ENCODE measurements at regions of chr19 and their contacts with region 1.

Region 1: DNA sequence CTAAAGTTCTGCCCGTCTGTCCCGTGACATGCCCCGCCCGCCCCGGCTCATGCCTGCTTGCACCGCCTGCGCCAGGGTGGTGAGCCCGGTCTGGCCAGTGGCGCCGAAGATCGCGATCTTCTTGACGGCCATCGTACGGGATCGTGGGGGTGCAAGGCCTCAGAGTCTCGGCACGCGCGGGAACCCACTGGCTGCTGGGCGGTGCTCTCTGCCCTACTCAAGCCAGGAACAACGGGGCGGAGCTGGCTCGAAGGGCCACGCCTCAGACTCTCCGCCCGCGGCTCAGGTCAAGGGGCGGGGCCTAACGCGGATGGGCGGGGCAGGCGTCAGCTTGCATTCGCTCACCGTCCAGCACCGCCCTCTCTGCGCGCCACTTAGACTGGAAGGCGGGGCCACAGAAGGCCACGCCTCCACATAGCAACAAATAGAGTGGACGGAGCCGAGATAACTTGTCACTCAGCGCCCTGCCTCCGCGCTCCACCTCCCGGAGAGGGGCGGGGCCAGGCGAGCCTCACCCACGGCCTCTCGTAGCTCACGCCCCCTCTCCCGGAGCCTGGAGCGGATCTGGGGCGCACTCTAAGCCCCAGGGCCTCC is at the start of gene BLVRB:
- DNase-seq: peak; percentile 98 to 100 (median 99)
- ATAC-seq: peak; percentile 90
- H3K4me3 ChIP-seq: peak within 1 kb of the TSS; percentile 44
- H3K4me3 Mint-ChIP-seq: peak within 1 kb of the TSS; percentile 83 to 95 (median 86)
- H3K27ac ChIP-seq: peak within 1 kb of the TSS; percentile 66
- H3K27ac Mint-ChIP-seq: peak within 1 kb of the TSS; percentile 70 to 94 (median 87)
- H3K4me1 ChIP-seq: peaks cover 0 to 7% of the 10 kb centered on the region in 2 donors
- H3K4me1 Mint-ChIP-seq: peaks cover 18 to 27% (median 25%) of the 10 kb centered on the region in 7 donors
- H3K27me3 ChIP-seq: peaks cover 3 to 4% of the 10 kb centered on the region in 2 donors
- H3K27me3 Mint-ChIP-seq: peaks cover 6 to 28% (median 7%) of the 10 kb centered on the region in 5 donors
- total RNA-seq, gene BLVRB: 11.0 to 42.2 (median 13.3) TPM

Region 2: GRCh38 chr19:40348125-40348913 is 117.3 kb before region 1 on chr19 and contains the starts of genes C19orf47 and PLD3:
- CTCF ChIA-PET with region 1: no interaction called
- POLR2A ChIA-PET with region 1: interaction called, 4 read pairs
- intact Hi-C with region 1: loop called in 1 of 2 experiments (anchors 1 kb)
- DNase-seq: peak; percentile 92 to 99 (median 97)
- ATAC-seq: peak; percentile 97
- H3K4me3 ChIP-seq: peak within 1 kb of the TSS; percentile 61
- H3K4me3 Mint-ChIP-seq: peak within 1 kb of the TSS; percentile 83 to 99 (median 96)
- H3K27ac ChIP-seq: peak within 1 kb of the TSS; percentile 86
- H3K27ac Mint-ChIP-seq: peak within 1 kb of the TSS; percentile 81 to 98 (median 93)
- H3K4me1 ChIP-seq: peaks cover 7 to 14% of the 10 kb centered on the region in 2 donors
- H3K4me1 Mint-ChIP-seq: peaks cover 20 to 51% (median 44%) of the 10 kb centered on the region in 7 donors
- H3K27me3 ChIP-seq: no peaks in the 10 kb centered on the region
- H3K27me3 Mint-ChIP-seq: peaks cover 0 to 2% (median 0%) of the 10 kb centered on the region in 5 donors
- total RNA-seq, gene C19orf47: 12.6 to 20.3 (median 15.8) TPM
- total RNA-seq, gene PLD3: 75.4 to 137 (median 114) TPM

Region 3: DNA sequence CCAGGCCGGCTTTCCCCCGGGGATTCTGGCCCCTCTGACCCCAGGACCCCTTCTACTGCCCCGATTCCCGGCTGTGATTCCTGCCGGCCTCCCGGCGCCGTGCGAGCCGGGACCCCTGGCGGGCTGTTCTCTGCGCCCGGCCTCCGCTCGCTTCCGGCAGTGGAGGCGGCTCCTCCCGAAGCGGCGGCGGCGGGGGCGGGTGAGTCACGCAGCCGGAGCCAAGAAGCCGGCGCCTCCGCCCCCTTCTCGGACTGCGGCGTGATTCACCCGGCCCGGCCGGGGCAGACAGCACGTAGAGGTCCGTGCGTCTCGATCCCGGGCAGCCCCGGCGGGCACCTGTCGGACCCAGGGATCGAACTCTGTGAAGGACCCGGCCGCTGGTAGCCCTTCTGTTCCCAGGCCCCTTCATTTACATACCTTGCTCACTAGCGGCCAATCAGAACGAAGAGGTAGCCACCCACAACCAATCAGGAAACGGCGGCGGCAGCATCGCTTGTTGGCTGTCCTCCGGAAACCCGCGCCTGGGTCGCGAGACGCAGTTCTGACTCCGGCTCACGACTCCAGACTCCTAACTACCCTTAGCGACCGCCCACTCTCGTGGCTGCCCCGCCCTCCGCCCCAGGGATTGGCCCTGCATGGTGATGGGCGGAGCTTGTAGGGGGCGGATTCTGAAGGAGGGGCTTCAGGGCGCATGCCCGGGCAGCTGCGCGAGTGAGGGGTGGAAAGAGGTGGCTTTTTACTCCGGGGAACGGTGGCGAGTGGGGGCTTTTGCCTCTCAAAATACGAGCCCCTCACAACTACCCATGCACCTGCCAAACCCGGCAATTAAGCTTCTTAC is 40.0 kb before region 1 on chr19 and contains the start of gene SERTAD1:
- CTCF ChIA-PET with region 1: interaction called, 33 read pairs
- POLR2A ChIA-PET with region 1: interaction called, 47 read pairs
- intact Hi-C with region 1: loop called (anchors 1 kb)
- DNase-seq: peak; percentile 99 to 100 (median 100)
- ATAC-seq: peak; percentile 96
- H3K4me3 ChIP-seq: peak within 1 kb of the TSS; percentile 77
- H3K4me3 Mint-ChIP-seq: peak within 1 kb of the TSS; percentile 90 to 99 (median 96)
- H3K27ac ChIP-seq: peak within 1 kb of the TSS; percentile 87
- H3K27ac Mint-ChIP-seq: peak within 1 kb of the TSS; percentile 92 to 100 (median 98)
- H3K4me1 ChIP-seq: peaks cover 15 to 18% of the 10 kb centered on the region in 2 donors
- H3K4me1 Mint-ChIP-seq: peaks cover 12 to 38% (median 24%) of the 10 kb centered on the region in 7 donors
- H3K27me3 ChIP-seq: no peaks in the 10 kb centered on the region
- H3K27me3 Mint-ChIP-seq: peaks cover 0 to 2% (median 0%) of the 10 kb centered on the region in 5 donors
- total RNA-seq, gene SERTAD1: 8.1 to 30.9 (median 13.5) TPM

Region 4: GRCh38 chr19:40502647-40503319 is 37.1 kb after region 1 on chr19:
- CTCF ChIA-PET with region 1: no interaction called
- POLR2A ChIA-PET with region 1: no interaction called
- intact Hi-C with region 1: no loop called
- DNase-seq: no peak
- ATAC-seq: no peak
- H3K4me3 ChIP-seq: no peak overlapping the region
- H3K4me3 Mint-ChIP-seq: no peak overlapping the region
- H3K27ac ChIP-seq: no peak overlapping the region
- H3K27ac Mint-ChIP-seq: no peak overlapping the region
- H3K4me1 ChIP-seq: no peaks in the 10 kb centered on the region
- H3K4me1 Mint-ChIP-seq: peaks cover 0 to 13% (median 5%) of the 10 kb centered on the region in 7 donors
- H3K27me3 ChIP-seq: no peaks in the 10 kb centered on the region
- H3K27me3 Mint-ChIP-seq: peaks cover 0 to 19% (median 0%) of the 10 kb centered on the region in 5 donors

Region 5: DNA sequence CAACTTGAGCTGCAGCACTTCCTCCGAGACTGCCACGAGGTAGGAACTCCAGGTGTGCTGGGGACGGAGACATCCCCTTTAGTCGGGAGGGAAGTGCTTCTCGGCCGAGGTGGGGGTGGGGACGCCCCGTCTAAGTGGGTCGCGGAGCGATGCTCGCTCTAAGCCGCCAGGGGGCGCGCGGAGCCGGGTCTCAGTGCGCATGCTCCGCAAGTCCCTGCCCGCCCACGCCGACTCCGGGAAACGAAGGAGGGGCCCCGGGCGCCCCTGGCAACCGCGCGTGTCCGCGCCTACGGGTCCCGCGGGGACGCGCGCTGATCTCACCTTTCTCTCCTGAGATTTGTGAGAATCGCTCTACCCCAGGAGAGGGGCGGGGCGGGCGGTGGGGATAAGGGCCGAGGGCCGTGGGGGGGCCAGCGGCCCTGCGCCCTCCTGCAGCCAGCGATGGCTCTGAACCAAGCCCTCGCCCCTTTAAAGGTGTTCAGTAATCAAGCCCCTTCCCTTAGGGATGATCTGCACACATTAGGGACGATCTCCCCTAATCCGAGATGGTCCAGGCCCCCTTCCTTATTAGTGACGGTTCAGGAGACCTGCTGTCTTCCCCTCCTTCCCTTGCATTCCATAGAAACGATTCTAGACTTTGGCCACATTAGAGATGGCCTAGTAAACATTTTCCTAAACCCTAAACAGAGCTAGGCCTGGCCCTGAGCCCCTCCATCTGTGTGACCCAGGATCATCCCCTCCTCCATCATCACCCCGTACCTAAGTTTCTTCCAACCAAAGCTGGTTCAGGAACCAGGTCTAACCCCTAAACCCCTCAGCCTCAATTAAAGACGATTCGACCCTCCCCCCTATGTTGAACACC is 63.7 kb after region 1 on chr19:
- CTCF ChIA-PET with region 1: interaction called, 3 read pairs
- POLR2A ChIA-PET with region 1: no interaction called
- intact Hi-C with region 1: loop called in 1 of 2 experiments (anchors 1 kb)
- DNase-seq: peak; percentile 84 to 97 (median 89)
- ATAC-seq: peak; percentile 97
- H3K4me3 ChIP-seq: peak overlapping the region; percentile 72
- H3K4me3 Mint-ChIP-seq: peak overlapping the region; percentile 66 to 87 (median 81)
- H3K27ac ChIP-seq: no peak overlapping the region
- H3K27ac Mint-ChIP-seq: peak overlapping the region in 6 of 9 donors; percentile 36 to 90 (median 60)
- H3K4me1 ChIP-seq: peaks cover 9 to 16% of the 10 kb centered on the region in 2 donors
- H3K4me1 Mint-ChIP-seq: peaks cover 5 to 25% (median 12%) of the 10 kb centered on the region in 7 donors
- H3K27me3 ChIP-seq: peaks cover 0 to 3% of the 10 kb centered on the region in 2 donors
- H3K27me3 Mint-ChIP-seq: peaks cover 13 to 37% (median 24%) of the 10 kb centered on the region in 5 donors

Region 6: GRCh38 chr19:40598121-40598917 is 132.7 kb after region 1 on chr19:
- CTCF ChIA-PET with region 1: interaction called, 5 read pairs
- POLR2A ChIA-PET with region 1: no interaction called
- intact Hi-C with region 1: loop called in 1 of 2 experiments (anchors 1 kb)
- DNase-seq: peak; percentile 55 to 92 (median 78)
- ATAC-seq: peak; percentile 80
- H3K4me3 ChIP-seq: no peak overlapping the region
- H3K4me3 Mint-ChIP-seq: peak overlapping the region in 8 of 10 donors; percentile 35 to 76 (median 50)
- H3K27ac ChIP-seq: no peak overlapping the region
- H3K27ac Mint-ChIP-seq: peak overlapping the region in 1 of 9 donors; percentile 36
- H3K4me1 ChIP-seq: peaks cover 46 to 47% of the 10 kb centered on the region in 2 donors
- H3K4me1 Mint-ChIP-seq: peaks cover 21 to 60% (median 50%) of the 10 kb centered on the region in 7 donors
- H3K27me3 ChIP-seq: peaks cover 17 to 25% of the 10 kb centered on the region in 2 donors
- H3K27me3 Mint-ChIP-seq: peaks cover 29 to 73% (median 36%) of the 10 kb centered on the region in 5 donors

Region 7: DNA sequence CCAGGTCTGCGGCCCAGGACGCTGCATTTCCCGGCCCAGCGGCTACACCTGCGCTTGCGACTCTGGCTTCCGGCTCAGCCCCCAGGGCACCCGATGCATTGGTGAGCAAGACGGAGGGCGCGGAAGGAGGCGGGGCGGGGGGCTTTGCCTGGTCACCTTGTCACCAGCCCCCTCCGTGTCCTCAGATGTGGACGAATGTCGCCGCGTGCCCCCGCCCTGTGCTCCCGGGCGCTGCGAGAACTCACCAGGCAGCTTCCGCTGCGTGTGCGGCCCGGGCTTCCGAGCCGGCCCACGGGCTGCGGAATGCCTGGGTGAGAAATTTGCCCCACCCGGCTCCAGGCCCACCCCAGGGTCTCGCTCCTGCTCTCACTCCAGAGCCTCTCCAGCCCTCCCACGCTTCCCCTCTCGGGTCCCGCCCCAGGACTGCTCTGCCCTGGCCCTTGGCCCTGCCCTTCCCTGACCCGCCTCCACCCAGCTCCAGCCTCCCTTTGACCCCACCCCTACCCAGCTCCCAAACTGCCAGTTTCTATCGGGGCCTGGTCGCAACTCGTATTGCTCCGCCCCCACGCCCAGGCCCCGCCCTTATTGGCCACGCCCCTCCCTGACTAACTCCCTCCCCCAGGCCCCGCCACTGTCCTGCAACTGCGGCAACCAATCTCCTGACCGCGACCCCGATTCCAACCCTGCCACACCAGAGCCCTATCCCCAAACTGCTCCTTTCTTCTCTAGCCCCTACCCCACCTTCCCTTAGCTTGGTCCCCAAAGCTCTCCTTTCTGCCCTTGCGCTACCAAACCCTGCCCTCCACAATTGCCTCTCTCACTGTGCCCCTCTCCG is 144.1 kb after region 1 on chr19:
- CTCF ChIA-PET with region 1: interaction called, 5 read pairs
- POLR2A ChIA-PET with region 1: interaction called, 3 read pairs
- intact Hi-C with region 1: loop called (anchors 1 to 5 kb)
- DNase-seq: peak; percentile 67 to 96 (median 78)
- ATAC-seq: peak; percentile 64
- H3K4me3 ChIP-seq: peak overlapping the region; percentile 63
- H3K4me3 Mint-ChIP-seq: peak overlapping the region; percentile 75 to 92 (median 86)
- H3K27ac ChIP-seq: peak overlapping the region; percentile 74
- H3K27ac Mint-ChIP-seq: peak overlapping the region; percentile 89 to 100 (median 92)
- H3K4me1 ChIP-seq: peaks cover 35 to 45% of the 10 kb centered on the region in 2 donors
- H3K4me1 Mint-ChIP-seq: peaks cover 20 to 78% (median 63%) of the 10 kb centered on the region in 7 donors
- H3K27me3 ChIP-seq: no peaks in the 10 kb centered on the region
- H3K27me3 Mint-ChIP-seq: peaks cover 0 to 8% (median 0%) of the 10 kb centered on the region in 5 donors

Region 8: GRCh38 chr19:41076286-41076685 is 610.6 kb after region 1 on chr19:
- CTCF ChIA-PET with region 1: no interaction called
- POLR2A ChIA-PET with region 1: no interaction called
- intact Hi-C with region 1: no loop called
- DNase-seq: no peak
- ATAC-seq: no peak
- H3K4me3 ChIP-seq: no peak overlapping the region
- H3K4me3 Mint-ChIP-seq: no peak overlapping the region
- H3K27ac ChIP-seq: no peak overlapping the region
- H3K27ac Mint-ChIP-seq: no peak overlapping the region
- H3K4me1 ChIP-seq: no peaks in the 10 kb centered on the region
- H3K4me1 Mint-ChIP-seq: no peaks in the 10 kb centered on the region
- H3K27me3 ChIP-seq: no peaks in the 10 kb centered on the region
- H3K27me3 Mint-ChIP-seq: peaks cover 21 to 52% (median 30%) of the 10 kb centered on the region in 5 donors

Region 9: GRCh38 chr19:42283143-42284065 is 1817.8 kb after region 1 on chr19:
- CTCF ChIA-PET with region 1: no interaction called
- POLR2A ChIA-PET with region 1: no interaction called
- intact Hi-C with region 1: loop called in 1 of 2 experiments (anchors 5 kb)
- DNase-seq: peak; percentile 93 to 97 (median 95)
- ATAC-seq: peak; percentile 83
- H3K4me3 ChIP-seq: peak overlapping the region; percentile 50
- H3K4me3 Mint-ChIP-seq: peak overlapping the region in 1 of 10 donors; percentile 0
- H3K27ac ChIP-seq: peak overlapping the region; percentile 83
- H3K27ac Mint-ChIP-seq: no peak overlapping the region
- H3K4me1 ChIP-seq: peaks cover 42 to 45% of the 10 kb centered on the region in 2 donors
- H3K4me1 Mint-ChIP-seq: peaks cover 22 to 44% (median 32%) of the 10 kb centered on the region in 7 donors
- H3K27me3 ChIP-seq: no peaks in the 10 kb centered on the region
- H3K27me3 Mint-ChIP-seq: no peaks in the 10 kb centered on the region

Measured in naive thymus-derived CD4-positive, alpha-beta T cell (primary cell).